A549 (cell line): ENCODE measurements at regions of chr7 and their contacts with region 1.

Region 1: DNA sequence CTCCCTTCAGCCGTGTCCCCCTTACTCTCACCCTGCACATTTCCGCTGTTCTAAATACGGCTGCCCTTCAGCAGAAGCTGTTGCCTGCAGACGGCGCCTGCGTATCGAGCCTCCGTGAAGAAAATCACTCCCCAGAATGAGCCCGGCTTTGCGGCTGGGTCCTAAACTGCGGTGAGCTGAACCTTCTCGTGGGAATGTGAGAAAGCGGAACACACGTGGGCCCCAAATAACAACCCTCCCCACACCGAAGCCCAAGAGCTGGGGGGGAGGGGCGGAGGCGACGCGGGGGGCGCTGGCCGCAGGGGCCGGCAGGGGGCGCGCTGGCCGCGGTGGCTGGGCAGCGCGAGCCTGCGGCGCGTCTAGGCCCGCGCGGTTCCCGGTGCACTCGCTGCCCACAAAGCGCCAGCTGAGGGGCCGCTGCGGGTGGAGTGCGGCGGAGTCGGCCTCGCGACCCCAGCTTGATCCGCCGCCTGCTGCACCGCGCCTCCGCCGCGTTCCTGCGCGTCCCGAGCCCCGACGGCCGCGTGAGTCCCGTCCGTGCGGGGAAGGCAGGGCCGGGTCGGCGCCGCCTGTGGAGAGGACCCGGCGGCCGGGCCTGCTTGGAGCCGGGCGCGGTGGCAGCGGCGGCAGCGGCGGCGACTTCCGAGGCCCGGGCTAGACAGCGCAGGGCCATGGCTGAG is at the start of gene ZNF398:
- DNase-seq: peak; percentile 82 to 85
- ATAC-seq: peak; percentile 82 to 91
- H3K4me3 ChIP-seq: peak within 1 kb of the TSS; percentile 91
- H3K27ac ChIP-seq: peak within 1 kb of the TSS; percentile 98 to 99
- H3K4me1 ChIP-seq: peaks cover 32% of the 10 kb centered on the region
- CTCF ChIP-seq: peak; percentile 93
- EP300 ChIP-seq: no peak
- POLR2A ChIP-seq: peak; percentile 84
- RAD21 ChIP-seq: no peak; a peak in 1 of 5 replicates
- polyA plus RNA-seq, gene ZNF398: 8.1 and 8.4 TPM in 2 replicates

Region 2: GRCh38 chr7:149036676-149037075 is 110.5 kb before region 1 on chr7:
- CTCF ChIA-PET with region 1: no interaction called
- POLR2A ChIA-PET with region 1: no interaction called
- DNase-seq: no peak
- ATAC-seq: no peak
- H3K4me3 ChIP-seq: no peak overlapping the region
- H3K27ac ChIP-seq: no peak overlapping the region
- H3K4me1 ChIP-seq: no peaks in the 10 kb centered on the region
- CTCF ChIP-seq: no peak
- EP300 ChIP-seq: no peak
- POLR2A ChIP-seq: no peak
- RAD21 ChIP-seq: no peak

Region 3: DNA sequence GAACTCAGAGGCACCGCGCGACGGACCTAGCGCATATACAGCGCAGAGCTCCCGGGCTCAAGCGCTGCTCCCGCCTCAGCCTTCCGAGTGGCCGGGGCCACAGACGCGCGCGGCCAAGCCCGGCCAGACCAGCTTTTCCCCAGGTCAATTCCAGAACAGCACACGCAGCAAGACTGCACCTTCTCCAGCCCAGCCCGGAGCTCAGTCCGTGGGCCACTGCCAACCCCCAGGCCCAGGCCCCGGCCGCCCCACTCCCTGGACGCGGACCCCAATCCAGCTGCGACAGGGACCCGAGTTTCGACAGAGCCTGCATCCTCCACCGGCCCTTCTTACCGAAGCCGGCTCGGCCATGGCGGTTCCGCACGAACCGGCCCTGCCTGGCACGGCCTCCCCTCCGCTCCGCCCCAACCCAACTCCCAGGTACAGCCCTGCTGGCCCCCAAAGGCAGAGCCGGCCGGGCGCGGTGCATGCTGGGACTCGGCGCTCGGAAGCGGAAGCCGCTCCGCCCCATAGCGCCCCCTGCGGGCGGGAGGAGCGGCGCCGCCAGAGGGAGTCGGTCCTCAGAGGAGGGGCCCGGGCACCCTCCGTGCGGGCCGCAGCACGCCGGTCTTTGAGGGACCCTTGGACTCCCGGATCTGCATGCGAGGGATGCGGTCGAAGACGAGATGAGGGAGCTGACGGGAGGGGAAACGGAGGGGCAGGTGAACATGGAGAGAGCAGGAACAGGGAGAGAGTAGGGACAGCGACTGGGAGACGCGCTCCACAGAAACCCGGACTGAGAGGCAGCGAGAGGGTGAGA is 21.1 kb before region 1 on chr7 and contains the start of gene ZNF425:
- CTCF ChIA-PET with region 1: interaction called, 84 read pairs
- POLR2A ChIA-PET with region 1: interaction called, 16 read pairs
- DNase-seq: peak; percentile 89 to 94
- ATAC-seq: peak; percentile 85 to 91
- H3K4me3 ChIP-seq: peak within 1 kb of the TSS; percentile 99
- H3K27ac ChIP-seq: peak within 1 kb of the TSS; percentile 95 to 96
- H3K4me1 ChIP-seq: peaks cover 14% of the 10 kb centered on the region
- CTCF ChIP-seq: peak; percentile 94
- EP300 ChIP-seq: no peak
- POLR2A ChIP-seq: peak; percentile 98
- RAD21 ChIP-seq: peak; percentile 34; a peak in 2 of 5 replicates
- polyA plus RNA-seq, gene ZNF425: 0.80 and 1.0 TPM in 2 replicates

Region 4: DNA sequence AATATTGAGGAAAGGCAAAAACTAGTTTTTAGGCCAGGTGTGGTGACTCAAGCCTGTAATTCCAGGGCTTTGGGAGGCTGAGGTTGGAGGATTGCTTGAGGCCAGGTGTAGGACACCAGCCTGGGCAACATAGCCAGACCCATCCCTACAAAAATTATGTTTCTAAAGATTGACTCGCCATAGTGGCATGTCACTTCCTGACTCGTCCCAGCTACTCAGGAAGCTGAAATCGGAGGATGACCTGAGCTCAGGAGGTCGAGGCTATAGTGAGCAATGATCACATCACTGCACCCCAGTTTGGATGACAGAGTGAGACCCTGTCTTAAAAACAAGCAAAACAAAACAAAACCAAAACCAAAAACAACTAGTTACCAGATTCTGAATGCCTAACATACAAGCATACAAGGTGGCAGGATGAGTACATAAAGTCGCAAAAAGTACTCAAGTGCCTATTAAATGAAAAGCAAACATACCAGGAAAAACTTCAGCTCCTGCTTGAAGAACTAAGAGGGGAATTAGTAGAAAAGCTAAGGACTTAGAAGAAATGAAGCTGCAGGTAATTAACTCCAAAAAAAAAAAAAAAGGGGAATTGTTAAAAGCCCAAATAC is 14.1 kb after region 1 on chr7:
- CTCF ChIA-PET with region 1: interaction called, 60 read pairs
- POLR2A ChIA-PET with region 1: no interaction called
- DNase-seq: peak in 1 of 2 experiments; percentile 16
- ATAC-seq: peak in 1 of 2 experiments; percentile 59; a peak in 3 of 6 replicates
- H3K4me3 ChIP-seq: no peak overlapping the region
- H3K27ac ChIP-seq: peak overlapping the region in 1 of 2 experiments; percentile 39; a peak in 2 of 6 replicates
- H3K4me1 ChIP-seq: peaks cover 15% of the 10 kb centered on the region; the same call in 1 of the 3 replicates
- CTCF ChIP-seq: no peak
- EP300 ChIP-seq: no peak
- POLR2A ChIP-seq: no peak
- RAD21 ChIP-seq: no peak

Region 5: GRCh38 chr7:149180722-149181449 is 33.7 kb after region 1 on chr7:
- CTCF ChIA-PET with region 1: interaction called, 12 read pairs
- POLR2A ChIA-PET with region 1: no interaction called
- DNase-seq: no peak
- ATAC-seq: no peak
- H3K4me3 ChIP-seq: no peak overlapping the region
- H3K27ac ChIP-seq: no peak overlapping the region
- H3K4me1 ChIP-seq: no peaks in the 10 kb centered on the region
- CTCF ChIP-seq: no peak
- EP300 ChIP-seq: no peak
- POLR2A ChIP-seq: no peak
- RAD21 ChIP-seq: no peak

Region 6: DNA sequence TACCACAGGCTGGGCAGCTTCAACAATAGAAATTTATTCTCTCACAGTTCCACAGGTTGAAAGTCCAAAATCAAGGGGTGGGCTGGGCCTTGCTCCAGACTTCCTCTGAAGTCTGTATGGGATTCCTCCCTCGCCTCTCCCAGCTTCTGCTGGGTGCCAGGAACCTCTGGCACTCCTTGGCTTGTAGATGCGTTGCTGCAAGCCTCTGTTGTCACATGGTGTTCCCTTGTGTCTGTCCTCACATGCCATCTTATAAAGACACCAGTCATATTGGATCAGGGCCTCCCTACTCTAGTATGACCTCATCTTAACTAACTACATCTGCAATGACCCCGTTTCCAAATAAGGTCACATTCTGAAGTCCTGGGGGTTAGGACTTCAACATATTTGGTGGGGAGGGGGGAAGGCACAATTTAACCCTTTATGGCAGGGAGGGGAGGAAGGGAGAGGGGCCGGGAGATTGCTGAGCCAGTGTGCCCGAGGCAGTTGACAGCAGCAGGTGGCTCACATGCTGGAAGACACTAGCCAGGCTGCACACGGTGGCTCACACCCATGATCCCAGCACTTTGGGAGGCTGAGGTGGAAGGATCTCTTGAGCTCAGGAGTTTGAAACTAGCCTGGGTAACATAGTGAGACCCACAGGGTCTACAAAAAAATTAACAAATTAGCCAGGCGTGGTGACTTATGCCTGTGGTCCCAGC is 67.0 kb after region 1 on chr7:
- CTCF ChIA-PET with region 1: interaction called, 16 read pairs
- POLR2A ChIA-PET with region 1: no interaction called
- DNase-seq: no peak
- ATAC-seq: no peak
- H3K4me3 ChIP-seq: no peak overlapping the region
- H3K27ac ChIP-seq: no peak overlapping the region
- H3K4me1 ChIP-seq: peaks cover 2% of the 10 kb centered on the region; the same call in 1 of the 3 replicates
- CTCF ChIP-seq: no peak
- EP300 ChIP-seq: no peak
- POLR2A ChIP-seq: no peak
- RAD21 ChIP-seq: no peak